Astrocyte of the cerebellum (primary cell): ENCODE measurements at regions of chr4 and their contacts with region 1.

Region 1: DNA sequence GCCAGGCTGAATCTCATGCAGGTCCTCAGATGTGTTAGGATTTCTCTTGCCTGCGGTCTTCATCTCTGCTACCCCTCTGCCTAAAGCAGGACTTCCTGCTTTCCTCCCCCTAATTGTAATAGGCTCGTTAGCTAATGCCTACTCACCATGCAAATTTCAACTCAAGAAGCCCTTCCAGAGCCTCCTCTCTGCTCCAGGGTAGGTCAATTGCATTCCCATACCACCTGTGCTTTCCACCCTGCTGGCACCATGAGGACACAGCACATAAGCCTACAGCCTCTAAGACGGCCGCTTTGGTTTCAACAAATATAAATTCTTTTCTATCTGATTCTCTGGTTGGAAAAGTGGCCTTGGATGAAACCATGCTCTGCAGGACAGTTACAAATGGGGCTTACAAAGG is 93.9 kb downstream of the QDPR start:
- DNase-seq: no peak
- H3K4me3 ChIP-seq: no peak overlapping the region
- CTCF ChIP-seq: no peak

Region 2: DNA sequence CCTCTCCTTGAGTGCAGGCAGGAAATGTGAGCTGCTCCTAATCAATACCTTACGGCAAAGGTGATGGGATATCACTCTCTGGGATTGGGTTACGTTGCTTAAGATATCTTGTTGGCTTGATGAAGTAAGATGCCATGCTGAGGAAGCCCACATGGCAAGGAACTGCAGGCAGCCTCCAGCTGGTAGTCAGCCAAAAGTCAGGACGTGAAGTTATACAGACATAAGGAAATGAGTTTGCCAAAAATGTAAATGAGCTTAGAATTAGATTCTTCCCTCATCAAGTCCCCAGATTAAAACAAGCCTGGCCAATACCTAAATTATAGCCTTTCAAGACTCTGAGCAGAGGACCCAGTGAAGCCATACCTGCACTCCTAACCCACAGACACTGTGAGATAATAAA is 61.1 kb before region 1 on chr4:
- in situ Hi-C with region 1: no loop called
- DNase-seq: no peak
- H3K4me3 ChIP-seq: no peak overlapping the region
- CTCF ChIP-seq: no peak

Region 3: GRCh38 chr4:17376205-17376604 is 41.8 kb before region 1 on chr4:
- in situ Hi-C with region 1: loop called (anchors 5 kb)
- DNase-seq: peak; percentile 45
- H3K4me3 ChIP-seq: no peak overlapping the region
- CTCF ChIP-seq: no peak